ENCODE measurements at regions of chr1 and their contacts with region 1.

Region 1: GRCh38 chr1:27489910-27490741 is at the start of gene WASF2:
- DNase-seq: peak; percentile 87 to 96
- H3K4me3 ChIP-seq: peak within 1 kb of the TSS; percentile 88
- H3K27ac ChIP-seq: peak within 1 kb of the TSS; percentile 94
- H3K4me1 ChIP-seq: peaks cover 11% of the 10 kb centered on the region
- H3K27me3 ChIP-seq: no peaks in the 10 kb centered on the region
- CTCF ChIP-seq: no peak
- total RNA-seq, gene WASF2: 96.5 and 134 TPM in 2 replicates

Region 2: DNA sequence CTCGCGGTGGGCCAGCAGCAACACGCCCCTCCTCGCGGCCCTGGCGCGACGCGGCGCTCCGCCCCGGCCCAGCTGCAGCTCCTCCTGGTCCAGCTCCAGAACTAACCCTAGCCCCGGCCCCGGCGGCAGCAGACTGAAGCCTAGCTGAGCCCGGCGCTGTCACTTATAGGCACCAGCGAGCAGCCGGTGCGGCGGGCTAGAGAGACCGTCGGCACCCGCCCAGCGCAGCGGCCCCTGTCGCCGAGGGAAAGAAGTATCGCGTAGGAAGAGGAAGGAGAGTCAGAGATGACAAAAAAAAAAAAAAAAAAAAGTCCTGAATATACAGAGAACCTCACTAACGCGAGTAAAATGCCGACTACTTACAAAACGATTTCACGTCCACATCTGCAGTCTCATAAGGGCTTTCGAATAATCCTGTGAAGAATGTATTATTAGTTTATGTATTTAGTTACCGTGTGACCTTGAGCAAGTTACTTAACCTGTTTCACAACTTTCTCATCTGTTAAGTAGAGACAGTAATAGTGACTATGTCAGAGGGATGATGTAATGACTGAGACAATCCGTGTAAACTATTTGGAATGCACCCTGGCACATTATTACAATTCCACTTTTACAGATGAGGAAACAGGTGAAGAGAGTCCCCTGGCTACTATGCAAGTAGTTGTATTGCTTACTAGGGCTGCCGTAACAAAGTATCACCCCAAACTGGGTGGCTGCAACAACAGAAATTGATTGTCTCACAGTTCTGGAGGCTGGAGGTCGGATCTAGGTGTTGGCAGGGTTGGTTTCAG is 334.9 kb before region 1 on chr1 and contains the start of gene SLC9A1:
- CTCF ChIA-PET with region 1: no interaction called
- POLR2A ChIA-PET with region 1: no interaction called
- intact Hi-C with region 1: no loop called
- DNase-seq: peak; percentile 91 to 92
- H3K4me3 ChIP-seq: peak within 1 kb of the TSS; percentile 76
- H3K27ac ChIP-seq: peak within 1 kb of the TSS; percentile 80
- H3K4me1 ChIP-seq: peaks cover 34% of the 10 kb centered on the region
- H3K27me3 ChIP-seq: no peaks in the 10 kb centered on the region
- CTCF ChIP-seq: peak; percentile 64
- total RNA-seq, gene SLC9A1: 17.9 and 27.5 TPM in 2 replicates

Region 3: DNA sequence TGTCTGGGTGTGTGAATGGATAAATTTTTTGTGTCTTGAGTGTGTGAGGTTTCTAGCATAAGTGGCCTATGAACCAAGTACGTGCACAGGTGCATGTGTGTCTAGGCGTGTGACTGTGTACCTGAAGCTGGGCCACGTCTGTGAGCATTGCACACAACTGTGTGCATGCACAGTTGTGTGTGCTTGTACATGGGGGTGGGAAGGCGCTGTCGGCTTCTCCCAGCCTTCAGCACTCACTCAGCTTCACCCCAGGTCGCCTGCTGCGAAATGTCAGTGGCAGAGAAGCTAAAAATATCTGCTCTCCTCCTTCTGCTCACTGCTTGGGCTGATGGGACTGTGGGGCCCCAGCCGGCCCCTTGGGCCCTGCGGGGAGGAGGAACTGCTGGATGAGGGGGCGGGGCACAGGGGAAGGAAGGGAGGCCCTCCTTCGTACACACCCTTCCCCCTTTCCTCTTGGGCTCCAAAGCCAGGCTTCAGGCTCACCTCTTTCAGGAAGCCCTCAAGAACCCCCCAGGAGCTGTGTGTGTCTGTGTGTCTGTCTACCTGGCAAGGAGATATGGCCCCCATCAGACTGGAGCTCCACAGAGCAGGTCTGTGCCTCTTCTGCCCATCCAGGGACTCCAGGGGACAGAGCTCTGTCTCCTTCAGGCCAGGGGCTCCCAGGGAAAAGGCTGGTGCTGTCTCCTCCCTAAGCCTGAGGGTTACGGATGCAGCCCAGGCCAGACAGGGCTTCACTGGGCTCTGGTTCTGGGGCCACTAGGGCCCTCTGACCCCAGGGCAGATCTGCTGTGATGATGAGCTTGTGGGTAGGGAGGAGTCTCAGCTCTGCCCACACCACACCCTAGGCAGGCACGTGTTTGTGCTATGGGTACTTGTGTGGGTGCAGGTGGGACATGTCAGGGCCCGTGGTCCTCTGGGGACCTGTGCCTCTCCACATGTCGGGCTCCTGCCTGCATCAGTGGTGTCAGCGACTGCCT is 35.5 kb after region 1 on chr1:
- CTCF ChIA-PET with region 1: no interaction called
- POLR2A ChIA-PET with region 1: interaction called, 3 read pairs
- intact Hi-C with region 1: loop called (anchors 5 kb)
- DNase-seq: peak in 1 of 2 experiments; percentile 38
- H3K4me3 ChIP-seq: no peak overlapping the region
- H3K27ac ChIP-seq: no peak overlapping the region
- H3K4me1 ChIP-seq: no peaks in the 10 kb centered on the region
- H3K27me3 ChIP-seq: no peaks in the 10 kb centered on the region
- CTCF ChIP-seq: no peak

Region 4: DNA sequence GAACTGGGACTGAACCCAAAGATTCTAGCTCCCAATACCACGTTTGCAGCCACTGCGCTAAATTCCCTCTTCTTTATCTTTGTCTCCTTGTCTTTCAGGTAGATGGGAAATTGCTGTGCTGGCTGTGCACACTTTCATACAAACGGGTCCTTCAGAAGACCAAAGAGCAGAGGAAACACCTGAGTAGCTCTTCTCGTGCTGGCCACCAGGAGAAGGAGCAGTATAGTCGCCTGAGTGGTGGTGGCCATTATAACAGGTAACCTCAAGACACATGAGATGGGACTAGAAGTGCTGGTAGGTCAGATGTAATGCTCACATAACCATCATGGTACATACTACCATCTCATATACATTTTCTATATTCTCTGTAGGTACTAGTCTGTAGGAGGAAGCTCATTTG is 254.4 kb after region 1 on chr1:
- CTCF ChIA-PET with region 1: no interaction called
- POLR2A ChIA-PET with region 1: interaction called, 12 read pairs
- intact Hi-C with region 1: no loop called
- DNase-seq: no peak
- H3K4me3 ChIP-seq: no peak overlapping the region
- H3K27ac ChIP-seq: no peak overlapping the region
- H3K4me1 ChIP-seq: no peaks in the 10 kb centered on the region
- H3K27me3 ChIP-seq: no peaks in the 10 kb centered on the region
- CTCF ChIP-seq: no peak

Measured in PC-9 (cell line).